PC-3 (cell line): ENCODE measurements at regions of chr2 and their contacts with region 1.

Region 1: DNA sequence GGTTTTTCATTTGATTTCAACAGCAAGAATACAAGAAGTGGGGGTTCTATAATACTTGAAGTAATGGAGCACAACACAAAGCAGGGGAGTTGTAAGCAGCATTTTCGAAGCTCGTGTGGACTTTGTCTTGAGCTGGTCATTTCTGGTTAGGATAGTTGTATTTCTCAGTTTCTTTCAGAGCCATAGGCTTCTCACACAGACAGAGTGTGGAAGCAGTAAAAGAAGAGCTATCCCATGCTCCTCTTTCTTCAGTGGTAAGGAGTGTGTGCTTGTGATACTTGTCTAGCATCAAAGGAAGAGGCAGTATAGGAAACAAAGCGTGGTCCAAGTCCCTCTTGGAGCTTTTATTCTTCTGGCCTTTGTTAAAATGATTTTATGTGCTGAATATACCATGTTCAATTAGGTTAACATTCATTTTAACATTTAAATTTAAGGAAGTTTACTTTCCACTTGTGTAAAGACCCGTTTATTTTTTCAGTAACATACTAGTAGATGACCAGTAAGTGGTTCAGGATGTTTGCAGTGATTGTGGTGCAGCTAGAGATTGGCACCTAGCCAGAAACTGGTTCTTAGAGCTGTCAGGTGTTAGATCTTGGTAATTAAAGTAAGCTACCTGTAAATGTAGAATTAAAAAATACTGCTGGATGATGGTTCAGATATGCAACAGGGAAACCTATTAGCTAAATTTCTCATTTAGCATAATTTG is 14.6 kb downstream of the CCNYL1 start:
- DNase-seq: peak; percentile 35
- ATAC-seq: peak; percentile 26
- H3K4me3 ChIP-seq: no peak overlapping the region
- H3K27ac ChIP-seq: peak overlapping the region; percentile 54; the same call in 1 of the 2 replicates
- H3K4me1 ChIP-seq: peaks cover 49% of the 10 kb centered on the region
- H3K27me3 ChIP-seq: no peaks in the 10 kb centered on the region
- CTCF ChIP-seq: no peak

Region 2: DNA sequence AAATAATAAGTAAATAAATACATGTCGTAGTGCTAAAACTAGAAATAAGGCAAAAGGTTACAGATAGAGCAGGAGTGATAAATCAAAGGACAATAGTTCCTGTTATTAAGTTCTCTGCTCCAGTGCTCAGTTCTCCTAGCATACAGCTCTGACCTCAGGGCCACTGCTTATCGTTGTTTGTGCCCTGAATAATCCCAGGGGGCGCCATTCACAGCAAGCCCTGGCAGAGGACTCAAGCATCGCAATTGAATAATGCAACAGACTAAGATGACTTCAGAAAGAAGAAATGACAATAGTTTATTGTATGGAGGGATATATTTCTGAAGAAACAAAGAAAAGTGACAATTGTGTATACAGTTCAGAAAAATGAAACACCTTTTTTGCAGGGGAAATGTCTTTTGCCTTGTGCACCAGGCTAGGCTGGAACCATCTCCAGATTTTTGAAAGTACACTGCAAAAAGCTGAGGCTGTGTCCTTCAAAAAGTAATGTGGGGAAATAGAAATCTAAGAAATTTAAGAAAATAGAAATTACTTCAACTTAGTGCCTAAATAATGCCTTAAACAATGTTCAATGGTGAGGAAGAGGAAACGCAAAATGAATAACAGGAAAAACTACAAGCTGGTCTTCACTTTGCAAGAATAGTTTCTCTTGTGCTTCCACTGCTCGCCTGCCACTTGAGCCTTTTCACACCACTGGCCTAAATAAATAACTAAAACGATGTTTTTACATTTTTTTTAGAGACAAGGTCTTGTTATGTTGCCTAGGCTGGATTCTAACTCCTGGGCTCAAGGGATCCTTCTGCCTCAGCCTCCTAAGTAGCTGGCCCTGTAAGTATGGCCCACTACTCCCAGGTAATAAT is 33.6 kb before region 1 on chr2:
- CTCF ChIA-PET with region 1: interaction called, 3 read pairs
- POLR2A ChIA-PET with region 1: no interaction called
- intact Hi-C with region 1: loop called (anchors 5 kb)
- DNase-seq: peak; percentile 46
- ATAC-seq: peak; percentile 32; the same call in 1 of the 2 replicates
- H3K4me3 ChIP-seq: no peak overlapping the region
- H3K27ac ChIP-seq: peak overlapping the region; percentile 88
- H3K4me1 ChIP-seq: peaks cover 39% of the 10 kb centered on the region
- H3K27me3 ChIP-seq: no peaks in the 10 kb centered on the region
- CTCF ChIP-seq: peak; percentile 85

Region 3: GRCh38 chr2:208608127-208608806 is 882.2 kb after region 1 on chr2:
- CTCF ChIA-PET with region 1: no interaction called
- POLR2A ChIA-PET with region 1: no interaction called
- intact Hi-C with region 1: no loop called
- DNase-seq: peak; percentile 2
- ATAC-seq: no peak
- H3K4me3 ChIP-seq: no peak overlapping the region
- H3K27ac ChIP-seq: no peak overlapping the region
- H3K4me1 ChIP-seq: no peaks in the 10 kb centered on the region
- H3K27me3 ChIP-seq: no peaks in the 10 kb centered on the region
- CTCF ChIP-seq: no peak